ENCODE measurements at regions of chr17 and their contacts with region 1.

Region 1: GRCh38 chr17:41403798-41404671 is 6.6 kb upstream of the KRT31 start:
- DNase-seq: peak; percentile 92
- ATAC-seq: peak; percentile 84
- H3K4me3 ChIP-seq: no peak overlapping the region
- H3K27ac ChIP-seq: peak overlapping the region; percentile 97
- H3K4me1 ChIP-seq: peaks cover 42% of the 10 kb centered on the region
- H3K27me3 ChIP-seq: no peaks in the 10 kb centered on the region
- CTCF ChIP-seq: no peak

Region 2: DNA sequence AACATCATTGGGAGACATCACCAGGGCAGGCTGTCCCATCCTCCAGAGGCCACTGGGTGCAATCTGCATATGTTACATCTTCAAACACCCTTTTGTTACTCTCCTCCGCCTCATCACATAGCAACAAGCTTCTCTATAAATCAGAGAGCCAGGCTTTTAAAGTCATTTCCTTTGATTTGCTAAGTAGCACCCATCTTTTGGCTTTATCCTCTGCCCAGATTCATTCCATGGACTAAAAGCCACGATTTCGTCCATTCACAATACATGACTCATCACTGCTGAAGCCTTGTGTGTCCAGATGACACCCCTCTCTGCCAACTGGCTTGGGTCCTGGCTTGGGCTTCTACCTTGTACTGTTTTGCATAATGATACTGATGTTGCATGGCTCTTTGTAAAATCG is 38.7 kb after region 1 on chr17:
- CTCF ChIA-PET with region 1: no interaction called
- POLR2A ChIA-PET with region 1: no interaction called
- intact Hi-C with region 1: no loop called
- DNase-seq: peak; percentile 25
- ATAC-seq: no peak
- H3K4me3 ChIP-seq: no peak overlapping the region
- H3K27ac ChIP-seq: no peak overlapping the region
- H3K4me1 ChIP-seq: peaks cover 6% of the 10 kb centered on the region; the same call in 1 of the 2 replicates
- H3K27me3 ChIP-seq: no peaks in the 10 kb centered on the region
- CTCF ChIP-seq: no peak

Region 3: DNA sequence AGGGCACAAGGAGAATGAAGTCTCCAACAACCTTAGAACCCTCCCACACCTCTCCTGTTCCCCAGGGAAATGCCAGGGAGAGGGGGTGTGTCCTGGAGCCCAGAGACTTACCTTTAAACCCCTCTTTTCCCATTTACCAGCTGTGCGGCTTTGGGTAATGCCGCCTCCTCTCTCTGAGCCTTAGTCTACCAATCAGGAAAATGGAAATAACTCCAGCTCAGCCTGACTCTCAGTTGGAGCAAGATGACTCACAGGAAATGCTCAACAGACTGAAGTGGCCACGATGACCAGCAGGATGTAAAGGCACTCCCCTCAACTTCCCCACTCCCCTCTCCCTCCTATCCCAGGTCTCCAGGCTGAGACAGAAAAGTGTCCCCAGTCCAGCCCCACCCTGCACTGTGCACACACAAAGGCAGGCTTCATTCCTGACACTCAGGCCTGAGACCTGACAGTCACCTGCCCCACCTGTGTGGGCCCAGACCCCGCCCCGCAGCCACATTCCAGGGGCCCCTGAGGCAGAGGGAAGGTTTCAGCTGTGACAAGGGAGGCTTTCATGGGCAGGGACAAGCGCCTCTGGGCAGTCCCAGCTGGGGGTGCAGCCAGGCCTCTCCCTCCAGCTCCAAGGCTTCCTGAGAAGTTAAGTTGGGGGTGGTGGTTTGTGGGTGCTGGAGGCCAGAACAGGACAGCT is 117.7 kb after region 1 on chr17:
- CTCF ChIA-PET with region 1: no interaction called
- POLR2A ChIA-PET with region 1: interaction called, 8 read pairs
- intact Hi-C with region 1: loop called (anchors 10 kb)
- DNase-seq: peak; percentile 95
- ATAC-seq: peak; percentile 60
- H3K4me3 ChIP-seq: peak overlapping the region; percentile 42; the same call in 1 of the 2 replicates
- H3K27ac ChIP-seq: peak overlapping the region; percentile 97
- H3K4me1 ChIP-seq: peaks cover 76% of the 10 kb centered on the region
- H3K27me3 ChIP-seq: no peaks in the 10 kb centered on the region
- CTCF ChIP-seq: no peak

Measured in PC-3 (cell line).